IMR-90 (cell line): ENCODE measurements at regions of chr15 and their contacts with region 1.

Region 1: DNA sequence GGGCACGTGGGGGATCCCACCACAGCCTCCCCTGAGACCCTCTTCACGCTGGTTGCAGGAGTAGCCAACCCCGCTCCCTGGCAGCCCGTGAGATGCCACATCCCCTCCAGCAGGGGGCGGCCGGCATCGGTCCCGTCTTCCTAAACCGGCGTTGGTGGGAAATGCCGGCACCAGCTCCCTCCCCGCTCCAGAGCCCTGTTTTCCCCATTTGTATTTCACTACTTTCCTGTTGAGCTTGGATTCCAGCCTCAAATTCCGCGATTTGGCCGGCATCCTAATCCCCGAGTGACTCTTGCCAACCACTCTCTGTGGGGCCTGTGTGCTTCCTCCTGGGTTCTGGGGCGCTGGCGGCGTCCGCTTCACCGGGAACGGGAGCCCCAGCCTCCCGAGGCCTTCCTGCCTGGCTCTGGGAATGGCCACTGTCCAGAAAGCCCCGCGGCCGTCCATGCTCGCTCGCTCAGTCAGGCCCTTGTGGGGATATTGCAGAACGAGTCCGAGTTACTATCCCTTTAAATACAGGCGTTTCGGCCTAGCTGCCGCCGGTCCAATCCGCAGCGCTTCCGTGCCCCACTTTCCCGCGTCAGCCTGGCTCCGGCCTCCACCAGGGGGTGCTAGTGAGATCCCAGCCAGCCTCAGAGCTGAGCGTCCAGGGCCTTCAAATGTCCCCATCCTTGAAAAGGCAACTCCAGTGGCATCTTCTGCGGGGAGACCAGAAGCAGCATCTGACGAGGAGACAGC is 8.1 kb upstream of the ADAMTS17 start:
- DNase-seq: peak; percentile 55
- ATAC-seq: peak; percentile 98
- H3K4me3 ChIP-seq: peak overlapping the region; percentile 48
- H3K27ac ChIP-seq: no peak overlapping the region
- H3K4me1 ChIP-seq: no peaks in the 10 kb centered on the region
- H3K27me3 ChIP-seq: no peaks in the 10 kb centered on the region
- CTCF ChIP-seq: peak; percentile 80
- POLR2A ChIP-seq: no peak
- RAD21 ChIP-seq: peak; percentile 42

Region 2: DNA sequence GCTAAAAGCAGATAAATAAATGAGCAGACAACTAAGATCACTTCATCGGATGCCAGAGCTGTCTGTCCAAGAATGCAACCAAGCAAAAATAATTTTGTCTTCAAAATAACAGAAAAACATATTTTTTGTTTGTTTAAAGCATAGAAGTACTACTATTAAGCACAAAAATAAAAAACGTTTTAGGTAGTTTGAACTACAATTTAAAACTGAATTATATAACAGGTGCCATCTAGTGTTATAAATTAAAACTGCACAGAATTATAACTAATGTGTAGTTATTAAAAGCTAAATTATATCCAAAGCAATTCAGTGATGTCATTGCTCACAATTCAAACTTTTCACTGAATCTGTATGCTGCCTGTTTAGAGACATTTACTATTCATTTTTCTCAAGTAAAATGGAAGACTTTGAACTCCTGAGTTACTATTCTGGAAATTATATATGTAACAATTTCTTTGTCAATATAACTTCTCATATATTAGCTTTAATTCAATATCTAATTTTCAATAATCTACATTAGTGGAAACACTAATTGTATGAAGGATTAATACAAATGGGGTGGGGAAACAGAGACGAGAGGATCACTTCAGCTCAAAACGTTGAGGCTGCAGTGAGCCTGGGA is 222.6 kb after region 1 on chr15:
- CTCF ChIA-PET with region 1: interaction called, 8 read pairs
- POLR2A ChIA-PET with region 1: no interaction called
- dilution Hi-C with region 1: no loop called
- in situ Hi-C with region 1: no loop called
- intact Hi-C with region 1: loop called (anchors 1 kb)
- DNase-seq: peak; percentile 23
- ATAC-seq: peak; percentile 48
- H3K4me3 ChIP-seq: no peak overlapping the region
- H3K27ac ChIP-seq: no peak overlapping the region
- H3K4me1 ChIP-seq: 0 out of 2 replicates have a peak, but pooled peaks cover 2% of the 10 kb centered on the region
- H3K27me3 ChIP-seq: no peaks in the 10 kb centered on the region
- CTCF ChIP-seq: peak; percentile 39
- POLR2A ChIP-seq: no peak
- RAD21 ChIP-seq: peak; percentile 1; the same call in 1 of the 2 replicates

Region 3: GRCh38 chr15:100602064-100602822 is 252.4 kb after region 1 on chr15 and contains the starts of genes ASB7 and LINS1:
- CTCF ChIA-PET with region 1: interaction called, 3 read pairs
- POLR2A ChIA-PET with region 1: no interaction called
- dilution Hi-C with region 1: no loop called
- in situ Hi-C with region 1: no loop called
- intact Hi-C with region 1: loop called (anchors 1 kb)
- DNase-seq: peak; percentile 100
- ATAC-seq: peak; percentile 96
- H3K4me3 ChIP-seq: peak within 1 kb of the TSS; percentile 82
- H3K27ac ChIP-seq: peak within 1 kb of the TSS; percentile 71
- H3K4me1 ChIP-seq: no peaks in the 10 kb centered on the region
- H3K27me3 ChIP-seq: no peaks in the 10 kb centered on the region
- CTCF ChIP-seq: no peak
- POLR2A ChIP-seq: no peak
- RAD21 ChIP-seq: no peak
- total RNA-seq, gene ASB7: 15.8 and 16.7 TPM in 2 replicates
- total RNA-seq, gene LINS1: 10.6 and 14.7 TPM in 2 replicates